MCF 10A (cell line): ENCODE measurements at regions of chr1 and their contacts with region 1.

Region 1: GRCh38 chr1:221851336-221851735 is 109.4 kb upstream of the DUSP10 start:
- DNase-seq: no peak
- H3K4me3 Mint-ChIP-seq: no peak overlapping the region
- H3K27ac Mint-ChIP-seq: peak overlapping the region; percentile 52
- H3K4me1 Mint-ChIP-seq: peaks cover 15% of the 10 kb centered on the region
- H3K27me3 Mint-ChIP-seq: no peaks in the 10 kb centered on the region
- CTCF ChIP-seq: no peak

Region 2: GRCh38 chr1:221839796-221840395 is 11.4 kb before region 1 on chr1:
- CTCF ChIA-PET with region 1: interaction called, 10 read pairs
- POLR2A ChIA-PET with region 1: interaction called, 9 read pairs
- intact Hi-C with region 1: no loop called
- DNase-seq: peak; percentile 100
- H3K4me3 Mint-ChIP-seq: no peak overlapping the region
- H3K27ac Mint-ChIP-seq: peak overlapping the region; percentile 94
- H3K4me1 Mint-ChIP-seq: peaks cover 63% of the 10 kb centered on the region
- H3K27me3 Mint-ChIP-seq: no peaks in the 10 kb centered on the region
- CTCF ChIP-seq: no peak